ENCODE measurements at regions of chr20 and their contacts with region 1.

Region 1: DNA sequence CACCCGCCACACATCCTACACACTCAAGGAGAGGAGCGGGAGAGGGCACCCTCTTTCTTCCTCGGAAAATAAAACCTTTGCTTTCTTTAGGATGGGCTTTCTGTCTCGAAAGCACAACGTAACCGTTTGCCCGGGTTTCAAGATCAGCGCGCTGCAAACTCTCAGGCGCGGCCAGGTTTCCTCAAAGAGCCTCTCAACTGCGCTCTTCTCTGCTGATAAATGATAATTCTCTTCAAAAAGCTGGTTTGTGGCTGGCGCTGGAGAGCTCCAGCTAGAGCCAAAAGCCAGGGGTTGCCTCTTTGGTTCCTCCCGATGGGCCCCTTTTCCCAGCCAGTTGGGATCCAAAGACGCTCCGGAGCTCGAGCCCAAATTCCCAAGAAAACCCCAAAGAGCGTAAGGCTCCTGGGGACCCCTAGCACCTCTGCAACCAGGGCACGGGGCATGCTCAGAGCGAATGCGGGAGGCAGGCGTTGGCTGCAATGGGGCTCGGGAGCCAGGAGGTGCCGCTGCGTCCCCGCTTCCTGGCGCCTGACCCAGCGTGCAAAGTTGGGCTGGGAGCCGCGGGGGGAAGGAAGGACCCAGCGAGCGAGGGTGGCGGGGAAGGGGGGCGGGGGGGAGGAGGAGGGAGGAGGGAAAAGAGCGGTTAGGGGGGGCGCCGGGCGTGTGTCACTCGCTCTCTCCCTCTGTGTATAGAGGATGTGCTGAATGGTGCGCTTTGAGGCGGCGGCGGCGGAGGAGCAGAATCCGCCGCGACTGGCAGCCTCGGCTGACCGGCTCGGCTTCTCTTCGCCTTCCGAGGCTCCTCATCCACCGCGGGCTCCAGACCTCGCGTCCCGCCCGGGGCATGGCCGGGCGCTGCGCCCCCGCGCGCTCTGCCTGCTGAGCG is at the start of gene PLCB1:
- DNase-seq: peak; percentile 90
- ATAC-seq: peak; percentile 92 to 94
- total RNA-seq, gene PLCB1: 25.9 to 27.1 TPM

Region 2: DNA sequence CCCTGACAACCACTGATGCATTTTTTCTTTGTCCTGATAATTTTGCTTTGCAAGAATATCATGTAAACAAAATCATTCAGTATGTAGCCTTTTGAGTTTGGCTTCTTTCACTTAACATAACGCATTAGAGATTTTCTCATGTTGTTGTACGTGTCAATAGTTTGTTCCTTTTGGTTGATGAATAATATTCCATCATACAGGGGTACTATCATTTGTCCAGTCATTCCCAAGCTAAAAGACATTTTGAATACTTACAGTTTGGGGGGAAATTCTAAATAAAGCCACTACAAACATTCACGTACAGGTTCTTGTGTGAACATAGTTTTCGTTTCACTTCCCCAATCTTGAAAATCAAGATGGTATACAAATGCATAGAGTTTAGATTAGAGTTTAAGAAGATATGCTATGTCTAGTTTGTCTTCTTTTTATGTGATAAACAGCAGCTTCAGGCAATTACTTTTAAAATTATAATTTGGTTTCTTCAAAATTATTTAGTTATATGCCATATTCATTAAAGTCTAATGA is 196.8 kb before region 1 on chr20:
- intact Hi-C with region 1: loop called in 1 of 2 experiments (anchors 10 kb)
- DNase-seq: no peak
- ATAC-seq: no peak

Region 3: DNA sequence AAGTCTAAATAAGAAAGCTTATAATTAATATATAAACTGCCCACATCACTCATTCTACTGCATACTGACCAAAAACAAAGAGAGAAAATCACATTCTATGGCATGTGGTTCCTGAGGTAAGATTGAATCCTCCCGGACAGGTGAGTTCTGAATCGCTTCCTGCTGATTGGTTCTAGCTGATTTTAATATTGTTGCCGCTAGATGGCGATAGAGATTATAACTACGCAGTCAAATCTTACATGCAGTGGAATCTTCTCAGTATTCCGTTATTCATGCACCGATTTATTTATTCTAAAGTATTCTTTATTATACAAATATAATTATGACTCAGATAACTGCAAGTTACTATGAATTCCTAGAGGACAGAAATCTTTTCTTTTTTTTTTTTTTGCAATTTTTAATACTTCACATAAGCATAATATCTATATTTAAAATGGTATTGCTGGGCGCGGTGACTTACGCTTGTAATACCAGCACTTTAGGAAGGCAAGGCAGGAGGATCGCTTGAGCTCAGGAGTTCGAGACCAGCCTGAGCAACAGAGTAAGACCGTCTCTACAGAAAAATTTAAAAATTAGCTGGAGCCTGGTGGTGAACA is 88.1 kb before region 1 on chr20:
- intact Hi-C with region 1: loop called in 1 of 2 experiments (anchors 5 kb)
- DNase-seq: no peak
- ATAC-seq: peak; percentile 68 to 70

Region 4: GRCh38 chr20:8234580-8234979 is 102.7 kb after region 1 on chr20:
- intact Hi-C with region 1: loop called in 1 of 2 experiments (anchors 10 kb)
- DNase-seq: no peak
- ATAC-seq: peak in 1 of 2 donors; percentile 13

Region 5: GRCh38 chr20:8260837-8261251 is 129.0 kb after region 1 on chr20:
- intact Hi-C with region 1: no loop called
- DNase-seq: peak; percentile 26
- ATAC-seq: peak in 1 of 2 donors; percentile 34

Region 6: DNA sequence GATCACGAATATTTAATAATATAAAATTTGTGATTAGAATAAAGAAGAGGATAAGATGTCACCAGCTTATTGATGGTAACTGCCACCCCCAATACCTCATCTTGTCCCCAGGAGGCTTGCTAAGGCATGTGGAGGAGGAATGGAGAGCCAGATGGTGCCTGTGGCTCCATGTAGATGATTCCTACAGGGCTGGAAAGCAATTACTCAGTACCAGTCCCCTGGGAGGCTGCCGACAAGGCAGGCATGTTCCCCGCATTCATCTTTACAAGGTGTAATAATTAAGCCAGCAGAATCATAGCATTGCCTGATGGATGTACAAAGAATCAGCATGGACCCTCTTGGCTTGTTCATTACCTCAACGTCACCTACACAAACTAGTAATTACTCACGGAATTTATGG is 155.5 kb after region 1 on chr20:
- intact Hi-C with region 1: no loop called
- DNase-seq: no peak
- ATAC-seq: no peak

Region 7: DNA sequence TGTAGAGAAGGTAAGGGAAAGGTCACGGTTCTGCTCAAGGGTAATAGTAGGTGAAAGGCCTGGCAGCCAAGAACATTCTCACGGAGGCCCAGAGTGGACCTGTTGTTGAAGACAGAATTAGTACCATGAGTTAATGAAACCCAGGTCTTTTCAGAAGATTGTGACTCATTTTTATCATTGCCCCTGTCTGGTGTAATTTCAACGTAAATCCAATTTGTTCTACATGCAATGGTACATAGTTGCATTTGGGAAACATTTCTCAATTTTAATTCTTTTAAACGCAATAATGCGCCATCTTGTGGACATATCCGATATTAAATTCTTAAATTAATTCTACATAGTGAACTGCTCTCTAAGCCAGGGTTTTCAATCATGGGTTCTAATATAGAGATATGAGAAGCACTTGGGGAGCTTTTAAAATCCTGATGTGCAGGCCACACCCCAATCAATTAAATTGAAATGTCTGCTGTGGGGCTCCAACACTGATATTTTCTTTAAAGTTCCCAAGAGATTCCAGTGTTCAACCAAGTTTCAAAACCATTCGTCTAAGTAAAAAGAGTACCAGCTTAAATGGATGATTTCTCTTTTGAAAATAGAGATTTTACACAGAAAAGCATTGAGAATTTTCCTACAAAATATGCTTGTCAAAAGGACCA is 257.7 kb after region 1 on chr20:
- intact Hi-C with region 1: loop called (anchors 2 to 10 kb)
- DNase-seq: no peak
- ATAC-seq: peak; percentile 49 to 58

Region 8: DNA sequence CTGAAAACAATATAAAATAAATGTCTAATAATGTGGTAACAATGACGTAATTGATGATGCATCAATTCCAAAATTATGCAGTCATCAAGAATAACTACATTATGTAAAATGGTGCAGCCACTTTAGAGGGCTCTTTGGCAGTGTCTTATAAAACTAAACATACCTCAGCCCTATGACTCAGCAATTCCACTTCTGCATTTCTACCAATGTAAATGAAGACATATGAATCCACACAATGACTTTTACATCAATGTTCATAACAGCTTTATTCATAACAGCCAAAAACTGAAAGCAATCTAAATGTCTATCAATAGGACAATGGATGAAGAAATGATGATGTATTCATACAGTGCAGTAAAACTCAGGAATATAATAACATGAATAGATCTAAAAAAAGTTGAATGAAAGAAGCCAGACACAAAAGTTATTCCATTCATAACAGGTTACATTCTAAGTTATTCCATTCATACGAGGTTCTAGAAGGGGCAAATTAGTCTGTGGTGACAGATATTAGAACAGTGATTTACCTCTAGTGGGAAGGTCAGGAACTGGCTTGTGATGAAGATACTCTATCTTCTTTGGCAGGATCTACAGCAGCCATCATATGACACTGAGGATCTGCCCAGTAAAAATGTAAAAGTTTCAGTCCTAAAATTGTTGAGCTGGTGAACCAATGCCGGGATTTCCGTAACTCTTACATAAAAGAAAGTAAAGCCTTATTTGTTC is 396.3 kb after region 1 on chr20:
- intact Hi-C with region 1: loop called in 1 of 2 experiments (anchors 10 kb)
- DNase-seq: no peak
- ATAC-seq: no peak

Region 9: GRCh38 chr20:8722276-8722928 is 590.6 kb after region 1 on chr20:
- intact Hi-C with region 1: loop called (anchors 2 to 10 kb)
- DNase-seq: no peak
- ATAC-seq: peak; percentile 76 to 84

Measured in left cardiac atrium (tissue), 4 donors.